SK-N-SH (cell line): ENCODE measurements at regions of chr15 and their contacts with region 1.

Region 1: GRCh38 chr15:96330450-96331145 is at the start of gene NR2F2:
- DNase-seq: peak; percentile 96
- H3K4me3 ChIP-seq: peak within 1 kb of the TSS; percentile 63 to 70
- H3K27ac ChIP-seq: peak within 1 kb of the TSS; percentile 55 to 70; a peak in 3 of 4 replicates
- H3K4me1 ChIP-seq: peaks cover 0 to 3% of the 10 kb centered on the region in 2 experiments; a peak in 1 of 4 replicates
- H3K27me3 ChIP-seq: peaks cover 32% of the 10 kb centered on the region
- CTCF ChIP-seq: no peak
- EP300 ChIP-seq: no peak; a peak in 1 of 4 replicates
- RAD21 ChIP-seq: no peak
- polyA plus RNA-seq, gene NR2F2: 2.8 and 3.9 TPM in 2 replicates

Region 2: GRCh38 chr15:95850834-95851233 is 479.8 kb before region 1 on chr15:
- CTCF ChIA-PET with region 1: no interaction called
- POLR2A ChIA-PET with region 1: no interaction called
- DNase-seq: no peak
- H3K4me3 ChIP-seq: no peak overlapping the region
- H3K27ac ChIP-seq: no peak overlapping the region
- H3K4me1 ChIP-seq: no peaks in the 10 kb centered on the region
- H3K27me3 ChIP-seq: no peaks in the 10 kb centered on the region
- CTCF ChIP-seq: peak; percentile 53
- EP300 ChIP-seq: no peak
- RAD21 ChIP-seq: peak; percentile 32

Region 3: DNA sequence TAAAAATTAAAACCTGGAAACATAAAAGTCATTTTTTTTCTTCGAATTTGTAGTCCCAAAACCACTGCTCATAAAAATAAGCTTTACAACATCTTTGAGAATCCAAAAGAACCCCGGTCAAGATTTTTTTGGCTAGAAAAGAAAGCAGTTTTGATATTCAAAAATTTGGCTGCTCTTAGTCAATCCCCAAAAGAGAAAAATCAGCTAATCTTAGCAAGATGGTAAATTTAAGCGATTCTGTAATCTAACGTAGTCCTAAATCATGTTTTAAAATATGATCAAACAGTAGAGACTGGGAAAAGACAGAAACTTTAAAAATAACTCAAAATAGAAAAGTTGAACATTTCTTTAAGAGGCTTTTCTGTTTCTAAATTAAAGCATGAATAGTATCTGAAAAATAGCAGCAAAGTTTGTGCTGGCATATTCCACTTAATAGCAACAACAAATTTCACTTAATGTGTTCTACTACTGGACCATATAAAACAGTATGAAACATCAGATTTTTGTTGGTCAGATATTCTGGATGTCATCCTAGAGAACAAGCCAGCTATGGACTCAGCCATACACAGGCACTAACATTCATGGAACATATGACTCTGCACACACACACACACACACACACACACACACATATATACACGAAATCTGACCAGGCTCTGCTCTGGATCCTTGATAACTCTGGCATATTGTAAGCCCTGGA is 19.2 kb before region 1 on chr15:
- CTCF ChIA-PET with region 1: interaction called, 11 read pairs
- POLR2A ChIA-PET with region 1: no interaction called
- DNase-seq: no peak
- H3K4me3 ChIP-seq: no peak overlapping the region
- H3K27ac ChIP-seq: no peak overlapping the region
- H3K4me1 ChIP-seq: no peaks in the 10 kb centered on the region
- H3K27me3 ChIP-seq: no peaks in the 10 kb centered on the region
- CTCF ChIP-seq: no peak
- EP300 ChIP-seq: no peak
- RAD21 ChIP-seq: no peak

Region 4: DNA sequence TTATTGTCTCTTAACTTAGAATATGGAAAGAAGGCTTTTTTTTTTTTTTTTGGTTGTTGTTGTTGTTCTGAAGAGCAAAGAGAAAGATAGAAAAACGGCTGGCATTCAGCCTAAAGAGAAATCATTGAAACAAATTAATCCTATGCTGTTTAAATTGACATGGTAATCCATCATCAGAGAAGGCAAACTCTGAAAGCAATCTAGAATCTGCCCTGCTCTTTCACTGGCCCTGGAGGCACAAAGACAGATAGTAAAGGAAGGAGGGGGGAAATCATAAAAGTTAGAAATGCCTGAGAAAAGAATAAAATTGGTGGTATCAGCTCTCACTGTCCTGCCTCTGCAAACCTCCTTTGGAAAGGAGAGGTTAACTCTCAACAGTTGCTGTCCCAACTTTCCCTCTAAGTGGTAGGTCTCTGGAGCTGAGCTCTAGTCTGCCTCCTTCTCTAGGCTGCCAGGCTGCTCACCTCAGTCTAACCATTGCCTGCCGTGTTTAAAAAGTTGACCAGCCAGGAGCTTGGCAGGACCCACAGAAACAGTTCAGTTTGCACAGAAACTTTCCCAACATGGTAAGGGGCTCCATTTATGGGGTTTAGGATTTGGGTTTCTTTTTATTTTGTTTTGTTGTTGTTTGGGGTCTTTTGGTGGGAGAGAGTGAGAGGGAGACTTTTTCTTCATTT is 13.5 kb before region 1 on chr15:
- CTCF ChIA-PET with region 1: interaction called, 11 read pairs
- POLR2A ChIA-PET with region 1: no interaction called
- DNase-seq: no peak
- H3K4me3 ChIP-seq: no peak overlapping the region
- H3K27ac ChIP-seq: no peak overlapping the region
- H3K4me1 ChIP-seq: no peaks in the 10 kb centered on the region
- H3K27me3 ChIP-seq: peaks cover 24% of the 10 kb centered on the region
- CTCF ChIP-seq: no peak
- EP300 ChIP-seq: no peak
- RAD21 ChIP-seq: no peak

Region 5: DNA sequence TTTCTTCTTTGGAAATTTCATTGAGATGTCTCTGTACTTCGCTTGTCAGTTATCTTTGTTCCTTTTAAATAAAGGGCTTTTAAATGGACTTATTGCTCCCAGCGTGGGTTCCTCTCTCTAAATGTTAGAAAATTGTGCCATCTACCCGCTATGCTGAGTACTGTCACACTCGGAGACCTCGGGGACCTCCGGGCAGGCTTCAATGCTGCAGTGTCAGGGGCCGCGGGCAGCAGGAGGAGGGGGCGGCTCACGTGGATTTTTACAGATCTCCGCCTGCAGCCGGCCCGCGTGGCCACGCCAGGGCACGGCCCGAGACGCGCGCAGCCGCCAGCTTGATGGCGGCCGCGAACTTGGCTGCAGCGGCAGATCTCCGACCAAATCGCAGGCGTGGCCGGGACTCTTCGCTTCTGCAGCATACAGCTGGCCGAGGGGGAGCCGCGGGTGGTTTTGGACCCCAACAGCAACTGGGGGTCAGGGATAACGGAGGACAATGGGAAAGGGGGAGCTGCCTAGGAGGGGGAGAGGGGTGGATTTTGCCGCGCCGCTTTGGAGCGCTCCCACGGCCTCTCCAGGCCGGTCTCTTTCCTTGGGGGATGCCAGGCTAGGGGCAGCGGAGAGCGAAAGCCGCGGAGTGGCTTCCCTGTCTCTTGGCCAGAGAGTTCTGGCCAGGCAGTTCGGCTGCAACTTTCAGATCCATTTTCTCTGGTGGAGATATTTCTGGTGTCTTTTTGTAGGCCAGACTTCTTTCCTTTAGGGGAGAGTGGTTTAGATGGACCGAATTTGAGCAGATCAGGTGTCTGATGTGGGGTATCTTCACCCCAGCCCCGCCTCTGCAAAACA is 15.2 kb after region 1 on chr15:
- CTCF ChIA-PET with region 1: interaction called, 42 read pairs
- POLR2A ChIA-PET with region 1: no interaction called
- DNase-seq: peak; percentile 87
- H3K4me3 ChIP-seq: peak overlapping the region; percentile 47 to 68
- H3K27ac ChIP-seq: no peak overlapping the region
- H3K4me1 ChIP-seq: peaks cover 0 to 3% of the 10 kb centered on the region in 2 experiments; a peak in 2 of 4 replicates
- H3K27me3 ChIP-seq: peaks cover 43% of the 10 kb centered on the region
- CTCF ChIP-seq: peak; percentile 76
- EP300 ChIP-seq: no peak
- RAD21 ChIP-seq: peak; percentile 79

Region 6: DNA sequence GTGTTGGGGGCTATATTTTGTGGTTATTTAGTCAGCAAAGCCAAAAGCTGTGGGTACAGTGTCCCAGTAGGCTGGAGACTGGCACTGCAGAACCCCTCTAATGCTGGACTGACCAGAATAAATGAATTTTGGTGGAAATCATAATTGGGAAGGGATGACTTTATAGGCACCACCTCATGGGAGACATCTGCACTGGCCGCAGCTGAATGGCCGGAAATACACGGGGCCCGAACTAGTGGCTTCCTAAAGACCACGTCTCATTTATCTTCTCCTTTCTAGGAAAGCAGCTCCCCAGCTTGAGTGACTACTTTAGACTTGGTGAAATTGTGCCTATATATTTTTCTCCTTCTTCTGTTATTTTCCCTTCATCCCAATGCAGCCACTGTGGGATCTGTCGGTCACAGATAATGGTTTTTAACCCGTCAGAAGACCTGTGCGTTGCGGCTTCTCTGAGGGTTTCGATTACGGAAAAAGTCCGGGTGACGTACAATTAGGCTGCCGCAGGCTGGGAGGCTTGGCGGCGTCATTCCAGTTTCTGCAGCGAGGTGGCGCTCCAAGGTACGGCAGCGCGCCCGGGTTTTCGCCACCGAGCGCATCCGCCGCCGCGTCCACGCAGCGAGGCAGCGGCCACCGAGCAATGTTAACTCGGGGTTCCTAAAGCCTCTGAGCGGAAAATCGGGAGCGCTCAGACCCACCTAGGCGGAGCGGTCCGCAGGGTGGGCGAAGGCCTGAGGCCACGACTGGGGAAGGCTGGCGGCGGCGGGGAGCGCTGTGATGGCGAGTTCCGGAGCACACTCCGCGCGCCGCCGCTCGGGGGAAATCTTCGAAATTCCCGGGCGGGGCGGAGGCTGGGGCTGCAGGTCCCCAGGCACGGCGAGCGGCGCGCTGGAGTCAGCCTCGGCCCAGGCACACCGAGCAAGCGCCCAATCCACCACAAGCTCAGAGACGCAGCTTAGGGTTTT is 26.2 kb after region 1 on chr15:
- CTCF ChIA-PET with region 1: interaction called, 28 read pairs
- POLR2A ChIA-PET with region 1: no interaction called
- DNase-seq: peak; percentile 86
- H3K4me3 ChIP-seq: peak overlapping the region; percentile 54 to 82
- H3K27ac ChIP-seq: no peak overlapping the region
- H3K4me1 ChIP-seq: peaks cover 0 to 4% of the 10 kb centered on the region in 2 experiments; a peak in 1 of 4 replicates
- H3K27me3 ChIP-seq: peaks cover 90% of the 10 kb centered on the region
- CTCF ChIP-seq: peak; percentile 92
- EP300 ChIP-seq: no peak
- RAD21 ChIP-seq: peak; percentile 67

Region 7: DNA sequence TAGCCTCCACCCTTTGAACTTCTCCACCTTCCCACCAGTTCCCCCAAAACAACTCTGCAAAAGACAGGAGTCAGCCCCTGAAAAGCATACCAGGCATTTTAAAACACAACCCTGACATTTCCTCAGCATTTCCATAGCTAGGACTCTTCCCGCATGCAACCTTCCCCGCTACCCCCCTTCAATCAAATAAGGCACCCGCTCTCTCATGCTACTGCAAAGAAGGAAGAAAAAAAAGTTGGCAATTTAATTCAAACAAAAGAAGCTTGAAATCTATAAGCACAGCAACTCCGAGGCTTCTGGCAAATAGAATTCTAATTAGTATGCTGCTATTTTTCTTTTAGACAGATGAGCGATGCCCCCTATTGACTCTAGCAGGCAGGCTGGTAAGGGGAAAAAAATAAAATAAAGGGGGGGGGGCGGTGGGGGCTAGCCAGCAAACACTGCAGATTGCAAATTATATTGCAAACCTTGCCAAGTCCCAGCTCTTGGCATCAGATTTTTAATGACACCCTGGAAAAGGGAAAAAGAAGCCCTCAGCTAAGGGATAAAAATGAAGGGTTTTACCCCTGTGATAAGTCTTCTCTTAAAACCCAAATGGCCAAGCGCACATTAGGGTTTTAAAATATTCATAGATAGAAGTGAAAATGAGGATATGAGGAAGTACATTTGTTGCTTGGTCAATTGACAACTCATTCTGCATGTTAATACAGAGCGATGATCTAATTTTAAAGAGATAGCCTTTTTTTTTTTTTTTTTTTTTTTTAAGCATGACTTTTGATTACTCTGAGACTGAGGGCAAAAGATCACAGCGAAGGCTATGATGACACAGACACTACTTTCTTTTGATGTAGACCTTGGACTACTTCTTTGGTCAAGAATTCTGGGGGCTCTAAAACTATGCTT is 255.1 kb after region 1 on chr15:
- CTCF ChIA-PET with region 1: interaction called, 18 read pairs
- POLR2A ChIA-PET with region 1: no interaction called
- DNase-seq: peak; percentile 40
- H3K4me3 ChIP-seq: no peak overlapping the region
- H3K27ac ChIP-seq: no peak overlapping the region
- H3K4me1 ChIP-seq: no peaks in the 10 kb centered on the region; a peak in 1 of 4 replicates
- H3K27me3 ChIP-seq: no peaks in the 10 kb centered on the region
- CTCF ChIP-seq: no peak
- EP300 ChIP-seq: no peak
- RAD21 ChIP-seq: peak; percentile 64